BJ (cell line): ENCODE measurements at regions of chr22 and their contacts with region 1.

Region 1: GRCh38 chr22:46019351-46019750 is 42.4 kb upstream of the WNT7B start:
- DNase-seq: no peak
- H3K4me3 ChIP-seq: no peak overlapping the region
- H3K27me3 ChIP-seq: no peaks in the 10 kb centered on the region
- CTCF ChIP-seq: no peak

Region 2: DNA sequence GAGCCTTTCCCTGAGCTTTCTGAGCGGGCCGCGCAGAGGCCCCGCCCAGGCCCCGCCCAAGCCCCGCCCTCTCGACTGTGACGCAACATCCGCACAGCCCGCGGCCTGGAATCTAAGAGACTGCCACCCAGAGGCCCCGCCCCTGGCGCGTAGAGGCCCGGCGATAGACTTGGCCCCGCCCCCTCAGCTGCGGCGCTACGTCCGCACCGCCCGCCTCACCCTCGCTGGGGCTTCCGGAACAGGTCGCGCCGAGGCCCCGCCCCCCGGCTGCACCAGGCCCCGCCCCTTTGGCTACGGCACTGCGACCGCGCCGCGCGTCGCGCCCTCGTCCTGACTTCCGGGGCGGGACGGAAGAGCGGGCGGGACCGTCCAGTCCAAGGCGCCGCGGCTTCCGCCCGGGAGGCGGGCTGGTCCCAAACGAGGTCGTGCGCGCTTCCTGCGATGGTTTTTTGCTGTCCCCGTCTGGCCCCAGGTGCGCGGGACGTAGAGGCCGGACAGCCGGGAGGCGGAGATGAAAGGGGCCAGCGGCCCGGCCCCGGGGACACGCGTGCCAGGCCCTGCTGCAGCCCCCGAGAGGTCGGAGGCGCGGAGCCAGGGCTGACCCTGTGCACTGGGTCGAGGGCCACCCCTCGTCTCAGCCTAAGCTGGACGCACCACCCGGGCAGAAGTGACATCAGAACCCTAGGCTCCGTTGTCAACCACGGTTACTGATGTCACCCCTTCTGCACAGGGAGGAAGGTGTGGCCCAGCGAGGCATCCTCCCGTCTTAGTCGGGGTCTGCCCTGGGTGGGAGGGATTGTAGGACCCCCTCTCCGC is 16.6 kb after region 1 on chr22:
- CTCF ChIA-PET with region 1: interaction called, 9 read pairs
- POLR2A ChIA-PET with region 1: interaction called, 11 read pairs
- DNase-seq: peak; percentile 95
- H3K4me3 ChIP-seq: peak overlapping the region; percentile 62
- H3K27me3 ChIP-seq: no peaks in the 10 kb centered on the region
- CTCF ChIP-seq: no peak

Region 3: DNA sequence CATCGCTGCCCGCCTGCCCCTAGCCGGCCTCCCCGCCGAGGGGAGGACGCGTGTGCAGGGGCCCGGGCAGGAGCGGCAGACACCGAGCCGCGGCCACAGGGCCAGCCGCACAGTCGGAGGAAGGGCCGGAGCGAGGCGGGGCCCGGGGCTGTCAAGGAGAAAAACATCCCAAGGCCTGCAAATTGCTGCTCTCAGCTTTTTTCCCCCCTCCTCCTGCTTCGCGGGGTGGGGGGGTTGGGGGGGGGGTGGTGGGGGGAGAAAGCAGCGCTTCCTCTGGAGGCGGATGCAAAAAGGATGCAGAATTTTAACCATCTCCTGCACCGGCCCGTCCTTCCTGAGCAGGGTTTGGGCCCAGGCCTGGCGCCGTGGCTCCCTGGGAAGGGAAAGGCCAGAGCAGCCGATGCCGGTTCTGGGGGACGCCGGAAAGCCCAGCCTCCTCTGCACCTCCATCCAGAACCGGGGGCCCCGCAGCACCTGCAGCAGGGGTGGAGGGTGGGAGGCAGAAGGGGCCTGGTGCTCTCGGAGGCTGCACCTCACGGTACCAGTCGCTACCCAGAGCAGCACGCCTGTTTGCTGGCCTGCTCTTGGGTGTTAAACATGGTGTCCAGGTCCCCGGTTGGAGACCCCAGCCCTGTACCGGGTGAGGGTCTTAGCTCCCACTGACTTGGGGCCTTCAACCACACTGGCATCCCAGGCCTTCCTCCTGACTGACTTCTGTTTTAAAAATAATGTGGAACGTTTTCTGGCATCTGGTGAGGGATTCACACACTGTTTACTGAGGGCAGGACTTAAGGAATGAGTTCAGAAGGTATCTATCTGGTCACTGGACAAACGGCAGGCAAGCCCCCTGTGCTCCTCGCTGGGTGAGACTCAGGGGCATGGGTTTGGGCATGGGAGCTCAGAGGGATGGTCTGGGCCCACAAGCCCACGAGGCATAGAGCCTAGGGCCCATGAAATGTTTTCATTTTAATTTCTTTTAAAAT is 35.0 kb after region 1 on chr22:
- CTCF ChIA-PET with region 1: interaction called, 3 read pairs
- POLR2A ChIA-PET with region 1: interaction called, 16 read pairs
- DNase-seq: no peak
- H3K4me3 ChIP-seq: peak overlapping the region; percentile 62
- H3K27me3 ChIP-seq: no peaks in the 10 kb centered on the region
- CTCF ChIP-seq: no peak